Activated naive CD4-positive, alpha-beta T cell treated with anti-CD3 and anti-CD28 coated beads for 36 hours (primary cell): ENCODE measurements at regions of chr2 and their contacts with region 1.

Region 1: GRCh38 chr2:203327901-203328759 is at the start of gene ABI2:
- DNase-seq: peak; percentile 65
- H3K4me3 Mint-ChIP-seq: peak within 1 kb of the TSS; percentile 84
- H3K27ac Mint-ChIP-seq: peak within 1 kb of the TSS; percentile 73
- H3K4me1 Mint-ChIP-seq: peaks cover 27% of the 10 kb centered on the region
- H3K27me3 Mint-ChIP-seq: no peaks in the 10 kb centered on the region
- total RNA-seq, gene ABI2: 34.0 to 40.9 TPM

Region 2: DNA sequence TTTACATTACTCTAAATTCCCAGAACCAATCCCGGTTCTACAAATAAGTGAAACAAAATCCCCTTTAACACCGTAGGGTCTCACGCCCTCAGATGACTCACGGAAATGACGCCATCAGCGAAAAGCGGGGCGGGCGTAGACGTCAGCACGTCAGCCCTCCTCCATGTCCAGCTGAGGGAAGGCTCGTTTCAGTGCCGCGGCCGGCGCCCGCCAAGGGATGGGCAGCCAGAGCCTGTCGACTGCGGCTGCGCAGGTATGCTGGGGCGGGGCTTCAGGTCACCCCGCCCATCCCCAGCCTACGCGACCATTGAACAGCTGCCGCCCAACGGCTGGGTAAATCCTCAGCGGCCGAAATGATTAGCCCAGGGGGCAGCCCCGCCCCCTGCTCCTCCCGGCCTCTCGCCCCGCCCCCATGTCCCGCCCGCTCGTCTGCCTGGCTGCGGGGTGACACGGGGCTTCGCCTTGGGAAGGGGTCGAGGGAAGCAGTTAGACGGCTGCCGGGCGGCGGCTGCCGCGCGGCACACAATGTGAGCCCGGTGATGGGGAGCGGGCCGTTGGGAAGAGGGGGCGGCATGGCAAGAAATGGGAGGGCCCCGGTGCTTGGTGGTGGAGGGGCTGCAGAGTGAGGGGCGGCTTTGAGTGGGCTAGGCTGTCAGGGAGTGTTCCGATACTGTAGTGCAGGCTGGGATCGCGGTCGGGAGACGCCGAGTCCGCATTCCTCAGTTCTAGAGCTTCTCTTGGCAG is 313.5 kb before region 1 on chr2 and contains the start of gene NBEAL1:
- CTCF ChIA-PET with region 1: no interaction called
- intact Hi-C with region 1: loop called (anchors 2 kb)
- DNase-seq: peak; percentile 97
- H3K4me3 Mint-ChIP-seq: peak within 1 kb of the TSS; percentile 95
- H3K27ac Mint-ChIP-seq: peak within 1 kb of the TSS; percentile 74
- H3K4me1 Mint-ChIP-seq: peaks cover 27% of the 10 kb centered on the region
- H3K27me3 Mint-ChIP-seq: no peaks in the 10 kb centered on the region
- total RNA-seq, gene NBEAL1: 7.9 to 8.3 TPM